ENCODE measurements at regions of chr10 and their contacts with region 1.

Region 1: GRCh38 chr10:113891476-113891875 is 37.0 kb downstream of the NHLRC2 start:
- DNase-seq: no peak
- ATAC-seq: peak; percentile 89

Region 2: DNA sequence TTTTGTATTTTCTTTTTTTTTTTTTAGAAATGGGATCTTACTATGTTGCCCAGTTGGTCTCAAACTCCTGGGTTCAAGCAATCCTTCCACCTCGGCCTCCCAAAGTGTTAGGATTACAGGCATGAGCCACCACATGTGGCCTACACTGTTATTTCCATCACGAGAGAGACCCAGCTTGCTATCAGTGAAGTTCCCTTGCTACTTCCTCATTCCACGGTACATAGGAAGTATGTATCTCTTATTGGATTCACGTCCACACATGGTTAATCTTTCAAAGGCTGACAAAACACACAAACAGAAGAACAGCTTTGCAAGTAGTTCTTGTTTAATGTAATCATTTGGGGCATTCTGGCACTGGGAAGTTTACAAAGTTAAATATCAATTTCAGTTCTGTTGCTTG is 88.5 kb before region 1 on chr10:
- intact Hi-C with region 1: loop called (anchors 10 kb)
- DNase-seq: no peak
- ATAC-seq: no peak